Activated CD8-positive, alpha-beta T cell treated with anti-CD3 and anti-CD28 coated beads for 36 hours (primary cell): ENCODE measurements at regions of chr7 and their contacts with region 1.

Region 1: GRCh38 chr7:150962553-150963399 is 15.3 kb downstream of the KCNH2 start:
- DNase-seq: peak; percentile 69
- ATAC-seq: peak; percentile 98
- H3K4me3 Mint-ChIP-seq: no peak overlapping the region
- H3K27ac Mint-ChIP-seq: no peak overlapping the region
- H3K4me1 Mint-ChIP-seq: peaks cover 2% of the 10 kb centered on the region
- H3K27me3 Mint-ChIP-seq: peaks cover 16% of the 10 kb centered on the region
- CTCF ChIP-seq: peak; percentile 90

Region 2: DNA sequence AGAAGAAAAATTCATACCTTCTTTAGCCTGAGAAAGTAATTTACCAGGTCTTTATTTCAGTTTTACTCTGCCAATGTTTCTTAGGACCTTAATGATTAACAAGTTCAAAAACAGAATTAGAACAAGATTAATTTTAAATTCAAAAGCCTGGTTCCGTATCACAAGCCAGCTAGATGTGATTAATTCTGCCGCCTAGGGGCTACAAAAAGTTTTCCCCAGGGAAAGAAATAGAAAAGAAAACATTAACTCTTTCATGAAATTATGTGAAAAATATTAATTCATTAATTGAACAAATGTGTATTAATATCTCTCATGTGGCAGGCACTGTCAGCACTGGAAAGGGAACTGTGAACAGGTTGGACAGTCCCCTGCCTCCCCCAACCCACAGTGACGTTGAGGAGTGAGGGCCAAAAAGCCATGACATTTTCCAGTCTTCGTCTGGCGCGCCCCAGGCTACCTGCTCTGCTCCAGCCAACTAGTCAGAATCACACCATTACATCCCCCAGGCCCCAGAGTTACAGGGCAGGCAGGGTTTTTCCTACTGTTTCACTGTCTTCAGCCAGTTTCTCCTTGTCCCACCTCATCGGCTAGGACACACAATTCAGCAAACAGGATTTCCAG is 142.1 kb before region 1 on chr7:
- CTCF ChIA-PET with region 1: no interaction called
- POLR2A ChIA-PET with region 1: no interaction called
- intact Hi-C with region 1: no loop called
- DNase-seq: no peak
- ATAC-seq: no peak
- H3K4me3 Mint-ChIP-seq: no peak overlapping the region
- H3K27ac Mint-ChIP-seq: no peak overlapping the region
- H3K4me1 Mint-ChIP-seq: no peaks in the 10 kb centered on the region
- H3K27me3 Mint-ChIP-seq: peaks cover 9% of the 10 kb centered on the region
- CTCF ChIP-seq: no peak

Region 3: GRCh38 chr7:150944066-150945042 is 18.4 kb before region 1 on chr7:
- CTCF ChIA-PET with region 1: interaction called, 10 read pairs
- POLR2A ChIA-PET with region 1: interaction called, 3 read pairs
- intact Hi-C with region 1: no loop called
- DNase-seq: no peak
- ATAC-seq: no peak
- H3K4me3 Mint-ChIP-seq: no peak overlapping the region
- H3K27ac Mint-ChIP-seq: no peak overlapping the region
- H3K4me1 Mint-ChIP-seq: peaks cover 17% of the 10 kb centered on the region
- H3K27me3 Mint-ChIP-seq: peaks cover 5% of the 10 kb centered on the region
- CTCF ChIP-seq: no peak

Region 4: GRCh38 chr7:150974468-150975391 is 12.0 kb after region 1 on chr7:
- CTCF ChIA-PET with region 1: interaction called, 24 read pairs
- POLR2A ChIA-PET with region 1: interaction called, 5 read pairs
- intact Hi-C with region 1: no loop called
- DNase-seq: peak; percentile 75
- ATAC-seq: peak; percentile 76
- H3K4me3 Mint-ChIP-seq: peak overlapping the region; percentile 77
- H3K27ac Mint-ChIP-seq: peak overlapping the region; percentile 42
- H3K4me1 Mint-ChIP-seq: peaks cover 28% of the 10 kb centered on the region
- H3K27me3 Mint-ChIP-seq: peaks cover 25% of the 10 kb centered on the region
- CTCF ChIP-seq: peak; percentile 46

Region 5: GRCh38 chr7:151008511-151009323 is 45.9 kb after region 1 on chr7:
- CTCF ChIA-PET with region 1: interaction called, 16 read pairs
- POLR2A ChIA-PET with region 1: no interaction called
- intact Hi-C with region 1: no loop called
- DNase-seq: peak; percentile 83
- ATAC-seq: peak; percentile 53
- H3K4me3 Mint-ChIP-seq: peak overlapping the region; percentile 77
- H3K27ac Mint-ChIP-seq: peak overlapping the region; percentile 86
- H3K4me1 Mint-ChIP-seq: peaks cover 49% of the 10 kb centered on the region
- H3K27me3 Mint-ChIP-seq: no peaks in the 10 kb centered on the region
- CTCF ChIP-seq: peak; percentile 83

Region 6: GRCh38 chr7:151017953-151018420 is 55.2 kb after region 1 on chr7:
- CTCF ChIA-PET with region 1: interaction called, 30 read pairs
- POLR2A ChIA-PET with region 1: interaction called, 3 read pairs
- intact Hi-C with region 1: no loop called
- DNase-seq: peak; percentile 89
- ATAC-seq: peak; percentile 71
- H3K4me3 Mint-ChIP-seq: peak overlapping the region; percentile 79
- H3K27ac Mint-ChIP-seq: peak overlapping the region; percentile 75
- H3K4me1 Mint-ChIP-seq: peaks cover 52% of the 10 kb centered on the region
- H3K27me3 Mint-ChIP-seq: peaks cover 10% of the 10 kb centered on the region
- CTCF ChIP-seq: peak; percentile 99

Region 7: DNA sequence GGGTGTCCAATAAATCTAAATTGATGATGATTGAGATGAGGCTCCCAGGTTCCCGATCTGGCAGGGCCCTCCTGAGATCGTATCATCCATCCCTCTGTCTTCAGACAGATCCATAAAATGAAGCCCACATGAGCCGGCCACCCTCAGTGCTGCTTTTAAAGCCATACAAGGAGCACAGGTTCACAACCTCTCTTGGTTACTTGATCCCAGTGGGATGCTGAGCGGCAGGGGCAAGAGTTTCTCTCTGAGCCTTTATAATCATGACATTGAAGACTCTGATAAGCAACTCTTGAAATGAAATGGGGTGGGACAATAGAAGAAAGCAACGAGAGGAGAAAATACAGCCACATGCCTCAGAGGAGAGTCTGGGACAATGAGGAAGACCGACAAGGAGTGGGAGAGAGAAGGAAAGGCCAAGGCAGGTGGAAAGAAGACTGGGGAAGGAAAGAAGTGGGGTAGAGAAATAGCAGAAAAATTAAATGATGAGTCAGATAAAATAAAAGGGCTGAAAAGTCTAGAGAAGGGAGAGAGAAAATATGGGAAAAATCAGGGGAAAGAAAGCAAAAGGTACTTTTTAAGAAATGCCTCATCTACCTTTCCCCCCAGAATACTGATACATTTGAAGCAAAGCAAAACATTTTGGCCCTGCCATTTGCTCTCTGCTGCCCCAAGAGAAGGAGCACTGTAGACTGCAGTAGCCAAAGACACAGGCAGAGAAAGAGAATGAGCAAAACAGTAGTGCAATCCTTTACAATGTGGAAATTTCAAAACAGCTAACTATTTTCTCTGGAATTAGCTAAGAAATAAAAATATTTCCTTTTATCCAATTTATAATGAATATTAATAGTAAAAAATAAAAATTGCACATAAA is 190.1 kb after region 1 on chr7:
- CTCF ChIA-PET with region 1: no interaction called
- POLR2A ChIA-PET with region 1: no interaction called
- intact Hi-C with region 1: no loop called
- DNase-seq: no peak
- ATAC-seq: no peak
- H3K4me3 Mint-ChIP-seq: no peak overlapping the region
- H3K27ac Mint-ChIP-seq: no peak overlapping the region
- H3K4me1 Mint-ChIP-seq: no peaks in the 10 kb centered on the region
- H3K27me3 Mint-ChIP-seq: peaks cover 27% of the 10 kb centered on the region
- CTCF ChIP-seq: no peak